BJ (cell line): ENCODE measurements at regions of chr15 and their contacts with region 1.

Region 1: GRCh38 chr15:42920519-42921227 is at the start of gene TTBK2:
- DNase-seq: peak; percentile 89
- H3K4me3 ChIP-seq: peak within 1 kb of the TSS; percentile 84
- H3K27me3 ChIP-seq: no peaks in the 10 kb centered on the region
- CTCF ChIP-seq: peak; percentile 27; the same call in 1 of the 2 replicates
- polyA plus RNA-seq, gene TTBK2: 3.3 and 5.8 TPM in 2 replicates

Region 2: GRCh38 chr15:42608110-42608531 is 312.6 kb before region 1 on chr15:
- CTCF ChIA-PET with region 1: no interaction called
- POLR2A ChIA-PET with region 1: no interaction called
- DNase-seq: no peak
- H3K4me3 ChIP-seq: no peak overlapping the region
- H3K27me3 ChIP-seq: no peaks in the 10 kb centered on the region
- CTCF ChIP-seq: no peak

Region 3: GRCh38 chr15:42704492-42704926 is 216.2 kb before region 1 on chr15:
- CTCF ChIA-PET with region 1: interaction called, 30 read pairs
- POLR2A ChIA-PET with region 1: no interaction called
- DNase-seq: no peak
- H3K4me3 ChIP-seq: no peak overlapping the region
- H3K27me3 ChIP-seq: no peaks in the 10 kb centered on the region
- CTCF ChIP-seq: peak; percentile 91

Region 4: GRCh38 chr15:42937143-42937542 is 16.5 kb after region 1 on chr15:
- CTCF ChIA-PET with region 1: interaction called, 11 read pairs
- POLR2A ChIA-PET with region 1: no interaction called
- DNase-seq: no peak
- H3K4me3 ChIP-seq: no peak overlapping the region
- H3K27me3 ChIP-seq: no peaks in the 10 kb centered on the region
- CTCF ChIP-seq: no peak

Region 5: GRCh38 chr15:43048935-43049334 is 128.3 kb after region 1 on chr15:
- CTCF ChIA-PET with region 1: no interaction called
- POLR2A ChIA-PET with region 1: no interaction called
- DNase-seq: no peak
- H3K4me3 ChIP-seq: no peak overlapping the region
- H3K27me3 ChIP-seq: no peaks in the 10 kb centered on the region
- CTCF ChIP-seq: no peak